Psoas muscle (tissue), 8 donors: ENCODE measurements at regions of chr21 and their contacts with region 1.

Region 1: GRCh38 chr21:44892536-44893277 is 19.2 kb upstream of the PTTG1IP start:
- DNase-seq: peak; percentile 70 to 80
- ATAC-seq: peak; percentile 66 to 86 (median 74)
- H3K4me3 ChIP-seq: no peak overlapping the region
- H3K27ac ChIP-seq: no peak overlapping the region
- H3K4me1 ChIP-seq: no peaks in the 10 kb centered on the region
- H3K27me3 ChIP-seq: peaks cover 0 to 17% (median 7%) of the 10 kb centered on the region in 3 donors
- CTCF ChIP-seq: peak; percentile 78

Region 2: DNA sequence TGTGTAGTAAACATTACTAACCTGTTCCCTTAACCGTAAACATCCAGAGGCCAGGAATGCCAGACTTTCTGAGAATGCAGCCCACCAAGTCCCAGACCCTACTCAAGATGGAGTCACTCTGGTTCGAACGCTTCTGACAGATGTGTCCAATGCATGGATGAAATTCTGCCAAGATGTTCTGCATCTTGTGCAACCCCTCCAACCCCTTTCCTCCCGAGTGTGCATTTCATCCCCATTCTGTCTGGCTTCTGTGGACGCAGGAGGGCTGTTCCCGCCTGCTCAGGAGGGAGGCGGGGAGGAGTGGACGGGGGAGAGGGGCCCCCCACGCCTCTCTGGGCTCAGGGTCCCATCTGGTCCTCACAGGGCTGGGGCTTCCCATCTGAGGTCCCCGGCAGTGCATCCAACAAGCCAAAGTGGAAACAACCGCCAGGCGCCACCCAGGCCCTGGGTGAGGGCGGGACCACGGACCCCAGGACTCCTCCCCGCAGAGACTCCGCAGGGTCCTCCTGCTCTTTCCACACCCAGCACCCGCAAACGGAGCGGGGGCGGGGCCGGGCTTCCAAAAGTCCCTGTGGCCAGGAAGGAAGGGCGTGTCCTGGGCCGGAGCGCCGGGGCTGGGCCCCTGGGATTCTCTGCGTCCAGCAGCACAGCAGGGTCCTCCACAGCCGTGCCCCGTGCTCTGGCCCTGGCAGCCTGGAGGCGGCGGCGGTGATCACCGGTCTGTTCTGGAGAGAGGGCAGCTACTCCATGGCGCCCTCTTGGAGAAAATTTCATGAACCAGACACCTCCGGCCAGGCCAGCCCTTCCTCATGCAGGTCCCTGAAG is 47.1 kb before region 1 on chr21:
- intact Hi-C with region 1: no loop called
- DNase-seq: peak; percentile 77 to 81
- ATAC-seq: peak; percentile 37 to 73 (median 70)
- H3K4me3 ChIP-seq: peak overlapping the region; percentile 50
- H3K27ac ChIP-seq: no peak overlapping the region
- H3K4me1 ChIP-seq: peaks cover 10% of the 10 kb centered on the region
- H3K27me3 ChIP-seq: peaks cover 0 to 35% (median 0%) of the 10 kb centered on the region in 3 donors
- CTCF ChIP-seq: peak; percentile 29

Region 3: DNA sequence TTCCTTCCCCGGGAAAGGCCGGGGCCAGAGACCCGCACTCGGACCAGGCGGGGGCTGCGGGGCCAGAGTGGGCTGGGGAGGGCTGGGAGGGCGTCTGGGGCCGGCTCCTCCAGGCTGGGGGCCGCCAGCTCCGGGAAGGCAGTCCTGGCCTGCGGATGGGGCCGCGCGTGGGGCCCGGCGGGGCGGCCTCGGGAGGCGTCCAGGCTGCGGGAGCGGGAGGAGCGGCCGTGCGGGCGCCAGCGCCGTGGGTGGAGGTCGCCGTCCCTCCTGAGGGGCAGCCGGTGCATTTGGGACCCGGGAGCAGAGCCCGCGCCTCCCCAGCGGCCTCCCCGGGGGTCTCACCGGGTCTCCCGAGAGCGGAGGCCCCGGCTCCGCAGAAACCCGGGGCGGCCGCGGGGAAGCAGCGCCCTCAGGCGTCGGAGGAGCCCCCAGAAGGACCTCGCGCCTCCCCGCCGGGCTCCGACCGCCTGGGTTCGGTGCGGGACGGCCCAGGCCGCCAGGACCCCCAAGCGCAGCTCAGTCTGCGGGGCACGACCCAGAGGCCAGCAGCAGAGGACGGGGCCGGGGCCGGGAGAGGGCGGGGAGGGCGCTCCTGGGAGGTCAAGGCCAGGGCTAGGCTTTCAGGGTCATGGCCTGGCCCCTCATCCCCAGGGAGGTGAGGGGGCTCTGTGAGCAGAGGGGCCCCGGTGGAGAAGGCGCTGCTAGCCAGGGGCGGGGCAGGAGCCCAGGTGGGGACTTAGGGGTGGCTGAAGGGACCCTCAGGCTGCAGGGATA is 39.9 kb after region 1 on chr21:
- intact Hi-C with region 1: loop called (anchors 1 to 2 kb)
- DNase-seq: peak; percentile 49 to 70
- ATAC-seq: peak; percentile 59 to 69 (median 62)
- H3K4me3 ChIP-seq: peak overlapping the region; percentile 63
- H3K27ac ChIP-seq: no peak overlapping the region
- H3K4me1 ChIP-seq: peaks cover 23% of the 10 kb centered on the region
- H3K27me3 ChIP-seq: peaks cover 0 to 58% (median 16%) of the 10 kb centered on the region in 3 donors
- CTCF ChIP-seq: peak; percentile 49